ENCODE measurements at regions of chr11 and their contacts with region 1.

Region 1: DNA sequence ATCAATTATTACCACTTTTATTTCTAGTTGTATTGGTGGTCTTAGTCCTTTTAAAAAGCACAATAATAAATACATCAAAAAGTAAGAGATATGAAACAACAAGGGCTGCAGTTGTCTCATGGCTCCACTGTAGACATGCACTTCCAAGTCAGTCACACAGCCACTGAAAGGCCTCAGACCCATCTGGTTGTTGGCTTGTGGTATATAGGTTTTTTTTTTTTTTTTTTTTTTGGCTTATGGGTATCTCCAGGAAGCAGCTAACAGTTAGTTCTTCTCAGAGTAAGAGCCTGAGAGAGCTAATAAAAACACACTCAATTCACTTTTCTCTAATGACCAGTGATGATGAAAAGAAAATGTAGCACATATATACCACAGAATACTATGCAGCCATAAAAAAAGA is 6.0 kb upstream of the OR52E6 start:
- DNase-seq: no peak
- ATAC-seq: no peak
- H3K4me3 ChIP-seq: no peak overlapping the region
- H3K27ac ChIP-seq: no peak overlapping the region
- H3K4me1 ChIP-seq: no peaks in the 10 kb centered on the region
- H3K27me3 ChIP-seq: no peaks in the 10 kb centered on the region
- CTCF ChIP-seq: no peak

Region 2: DNA sequence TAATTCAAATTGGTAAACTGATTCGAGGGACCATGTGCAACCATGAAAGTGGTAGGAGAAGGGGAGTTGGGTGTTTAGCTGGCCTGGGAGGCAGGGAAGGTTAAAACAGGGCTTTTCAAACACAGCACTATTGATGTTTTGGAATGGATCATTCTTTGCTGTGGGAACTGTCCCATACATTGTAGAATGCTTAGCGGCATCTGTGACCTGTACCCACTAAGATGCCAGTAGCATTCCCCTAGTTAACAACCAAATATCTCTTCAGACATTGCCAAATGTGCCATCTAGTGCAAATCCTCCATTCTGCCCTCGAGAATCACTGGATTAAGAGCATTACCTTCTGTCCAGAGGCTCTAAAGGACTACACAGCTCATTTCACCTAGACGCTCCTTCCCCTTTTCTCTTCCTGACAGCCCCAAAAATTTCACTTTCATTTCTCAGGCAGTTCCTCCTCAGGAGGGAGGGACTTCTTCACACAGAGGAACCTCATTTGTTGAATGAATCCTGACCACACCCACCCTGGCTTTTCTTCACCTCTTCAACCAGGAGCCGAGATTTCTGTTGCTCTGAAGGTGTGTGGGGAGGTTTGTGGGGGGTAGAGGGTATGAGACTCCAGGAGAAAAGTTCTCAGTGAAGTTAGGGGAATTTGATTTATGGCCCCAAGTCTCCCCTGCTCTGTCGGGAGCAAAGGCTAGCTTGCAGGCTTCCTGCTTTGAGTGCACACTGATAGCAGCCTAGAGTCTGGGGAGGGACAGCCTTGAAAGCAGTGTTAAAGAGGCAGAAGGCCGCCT is 223.0 kb before region 1 on chr11 and contains the start of gene TRIM34:
- CTCF ChIA-PET with region 1: no interaction called
- POLR2A ChIA-PET with region 1: no interaction called
- intact Hi-C with region 1: no loop called
- DNase-seq: peak; percentile 70
- ATAC-seq: peak; percentile 60
- H3K4me3 ChIP-seq: peak within 1 kb of the TSS; percentile 71
- H3K27ac ChIP-seq: no peak within 1 kb of the TSS
- H3K4me1 ChIP-seq: peaks cover 45% of the 10 kb centered on the region
- H3K27me3 ChIP-seq: no peaks in the 10 kb centered on the region
- CTCF ChIP-seq: no peak
- total RNA-seq, gene TRIM34: 1.3 and 1.6 TPM in 2 replicates

Region 3: GRCh38 chr11:5899519-5899918 is 51.8 kb after region 1 on chr11:
- CTCF ChIA-PET with region 1: interaction called, 6 read pairs
- POLR2A ChIA-PET with region 1: interaction called, 15 read pairs
- intact Hi-C with region 1: no loop called
- DNase-seq: no peak
- ATAC-seq: no peak
- H3K4me3 ChIP-seq: no peak overlapping the region
- H3K27ac ChIP-seq: no peak overlapping the region
- H3K4me1 ChIP-seq: no peaks in the 10 kb centered on the region
- H3K27me3 ChIP-seq: no peaks in the 10 kb centered on the region
- CTCF ChIP-seq: no peak